ENCODE measurements at regions of chr9 and their contacts with region 1.

Region 1: GRCh38 chr9:22307013-22307711 is 139.5 kb upstream of the DMRTA1 start:
- DNase-seq: peak; percentile 54
- ATAC-seq: peak; percentile 67
- H3K4me3 ChIP-seq: no peak overlapping the region
- H3K27ac ChIP-seq: no peak overlapping the region
- H3K4me1 ChIP-seq: no peaks in the 10 kb centered on the region
- H3K27me3 ChIP-seq: peaks cover 12% of the 10 kb centered on the region; the same call in 1 of the 2 replicates
- CTCF ChIP-seq: peak; percentile 57 to 73 (median 64); a peak in 5 of 6 replicates
- POLR2A ChIP-seq: no peak
- RAD21 ChIP-seq: peak; percentile 82

Region 2: DNA sequence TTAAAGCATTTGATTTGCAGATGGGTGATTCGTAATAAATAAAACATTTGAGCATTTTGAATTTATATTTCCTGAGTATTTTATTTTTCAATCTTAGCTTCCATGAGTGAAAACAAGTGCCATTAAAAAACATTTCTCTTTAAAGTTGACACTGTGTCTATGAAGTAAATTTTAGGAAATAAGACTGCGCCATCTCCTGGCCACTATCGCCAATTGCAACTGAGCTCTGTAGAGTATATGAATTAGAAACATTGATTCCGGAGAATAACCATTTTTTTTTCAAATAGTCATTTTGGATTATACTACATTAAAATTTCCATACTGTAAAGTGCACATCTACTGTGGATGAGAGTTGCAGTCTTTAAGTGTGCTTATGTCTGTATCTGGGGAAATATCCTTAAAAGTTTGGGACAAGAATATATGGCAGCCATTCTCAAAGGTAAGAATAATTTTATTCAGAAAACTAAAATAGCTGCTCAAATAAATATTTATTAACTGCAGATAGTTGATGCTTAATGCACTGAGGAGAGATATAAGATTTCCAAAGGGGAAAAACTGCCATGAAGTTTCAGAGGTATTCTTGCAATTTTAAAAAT is 145.4 kb after region 1 on chr9:
- CTCF ChIA-PET with region 1: interaction called, 134 read pairs
- POLR2A ChIA-PET with region 1: interaction called, 7 read pairs
- RAD21 ChIA-PET with region 1: interaction called, 11 to 18 read pairs
- intact Hi-C with region 1: loop called (anchors 1 kb)
- DNase-seq: peak; percentile 29
- ATAC-seq: peak; percentile 66
- H3K4me3 ChIP-seq: no peak overlapping the region
- H3K27ac ChIP-seq: no peak overlapping the region
- H3K4me1 ChIP-seq: no peaks in the 10 kb centered on the region
- H3K27me3 ChIP-seq: peaks cover 21% of the 10 kb centered on the region
- CTCF ChIP-seq: peak; percentile 70 to 89 (median 78)
- POLR2A ChIP-seq: no peak
- RAD21 ChIP-seq: peak; percentile 75

Region 3: DNA sequence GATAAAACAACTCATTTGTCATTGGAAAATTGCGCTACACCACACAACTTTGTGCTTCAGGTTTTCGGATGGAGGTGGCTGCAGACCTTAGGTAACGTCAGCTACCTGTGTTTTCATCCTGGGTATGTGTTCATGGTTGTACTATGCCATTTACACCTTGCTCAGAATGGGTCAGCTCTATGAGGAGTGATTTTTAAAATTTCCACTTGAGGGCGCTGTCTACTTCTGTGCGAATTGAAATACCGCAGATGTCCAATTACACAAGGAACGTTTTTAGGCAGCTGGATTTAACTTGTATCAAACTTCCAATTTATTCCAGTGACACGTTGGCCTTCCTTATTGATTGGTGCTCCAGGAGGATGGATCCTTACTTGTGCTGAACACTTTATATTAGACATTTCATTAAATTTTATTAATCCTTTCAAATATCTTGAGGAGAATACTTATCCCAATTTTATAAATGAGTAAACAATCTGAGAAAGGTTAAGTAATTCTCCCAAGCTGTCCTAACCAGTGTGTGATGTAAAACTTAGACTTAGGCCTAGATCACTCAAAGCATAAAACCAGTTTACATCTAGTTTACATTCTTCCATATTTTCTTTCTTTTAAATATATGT is 162.9 kb after region 1 on chr9:
- CTCF ChIA-PET with region 1: interaction called, 13 read pairs
- POLR2A ChIA-PET with region 1: no interaction called
- RAD21 ChIA-PET with region 1: no interaction called
- intact Hi-C with region 1: no loop called
- DNase-seq: peak; percentile 26
- ATAC-seq: peak; percentile 95
- H3K4me3 ChIP-seq: no peak overlapping the region
- H3K27ac ChIP-seq: no peak overlapping the region
- H3K4me1 ChIP-seq: no peaks in the 10 kb centered on the region
- H3K27me3 ChIP-seq: peaks cover 27% of the 10 kb centered on the region
- CTCF ChIP-seq: peak; percentile 18 to 93 (median 65); a peak in 5 of 6 replicates
- POLR2A ChIP-seq: no peak
- RAD21 ChIP-seq: peak; percentile 72

Measured in HCT116 (cell line).